A549 (cell line): ENCODE measurements at regions of chr6 and their contacts with region 1.

Region 1: GRCh38 chr6:108260809-108261569 is at the start of gene SNX3:
- DNase-seq: peak; percentile 86 to 95
- ATAC-seq: peak; percentile 97 to 98
- H3K4me3 ChIP-seq: peak within 1 kb of the TSS; percentile 94
- H3K27ac ChIP-seq: peak within 1 kb of the TSS; percentile 96 to 98
- H3K4me1 ChIP-seq: peaks cover 6% of the 10 kb centered on the region; the same call in 1 of the 3 replicates
- CTCF ChIP-seq: no peak
- EP300 ChIP-seq: no peak
- POLR2A ChIP-seq: peak; percentile 58
- RAD21 ChIP-seq: 0 out of 5 replicates have a peak, but pooled peaks of 1 of the 2 experiments have one; percentile 9
- polyA plus RNA-seq, gene SNX3: 214 and 216 TPM in 2 replicates

Region 2: GRCh38 chr6:108277821-108278220 is 16.8 kb after region 1 on chr6:
- CTCF ChIA-PET with region 1: no interaction called
- POLR2A ChIA-PET with region 1: no interaction called
- DNase-seq: no peak
- ATAC-seq: no peak
- H3K4me3 ChIP-seq: no peak overlapping the region
- H3K27ac ChIP-seq: no peak overlapping the region
- H3K4me1 ChIP-seq: no peaks in the 10 kb centered on the region
- CTCF ChIP-seq: no peak
- EP300 ChIP-seq: no peak
- POLR2A ChIP-seq: no peak
- RAD21 ChIP-seq: no peak

Region 3: GRCh38 chr6:108294727-108295625 is 34.0 kb after region 1 on chr6 and contains the start of gene AFG1L:
- CTCF ChIA-PET with region 1: no interaction called
- POLR2A ChIA-PET with region 1: interaction called, 16 read pairs
- DNase-seq: peak; percentile 80 to 87
- ATAC-seq: peak; percentile 97 to 98
- H3K4me3 ChIP-seq: peak within 1 kb of the TSS; percentile 83
- H3K27ac ChIP-seq: peak within 1 kb of the TSS; percentile 96 to 98
- H3K4me1 ChIP-seq: peaks cover 6% of the 10 kb centered on the region; the same call in 1 of the 3 replicates
- CTCF ChIP-seq: no peak
- EP300 ChIP-seq: no peak
- POLR2A ChIP-seq: peak; percentile 62
- RAD21 ChIP-seq: no peak
- polyA plus RNA-seq, gene AFG1L: 2.1 and 2.3 TPM in 2 replicates